Mammary epithelial cell (primary cell): ENCODE measurements at regions of chr17 and their contacts with region 1.

Region 1: DNA sequence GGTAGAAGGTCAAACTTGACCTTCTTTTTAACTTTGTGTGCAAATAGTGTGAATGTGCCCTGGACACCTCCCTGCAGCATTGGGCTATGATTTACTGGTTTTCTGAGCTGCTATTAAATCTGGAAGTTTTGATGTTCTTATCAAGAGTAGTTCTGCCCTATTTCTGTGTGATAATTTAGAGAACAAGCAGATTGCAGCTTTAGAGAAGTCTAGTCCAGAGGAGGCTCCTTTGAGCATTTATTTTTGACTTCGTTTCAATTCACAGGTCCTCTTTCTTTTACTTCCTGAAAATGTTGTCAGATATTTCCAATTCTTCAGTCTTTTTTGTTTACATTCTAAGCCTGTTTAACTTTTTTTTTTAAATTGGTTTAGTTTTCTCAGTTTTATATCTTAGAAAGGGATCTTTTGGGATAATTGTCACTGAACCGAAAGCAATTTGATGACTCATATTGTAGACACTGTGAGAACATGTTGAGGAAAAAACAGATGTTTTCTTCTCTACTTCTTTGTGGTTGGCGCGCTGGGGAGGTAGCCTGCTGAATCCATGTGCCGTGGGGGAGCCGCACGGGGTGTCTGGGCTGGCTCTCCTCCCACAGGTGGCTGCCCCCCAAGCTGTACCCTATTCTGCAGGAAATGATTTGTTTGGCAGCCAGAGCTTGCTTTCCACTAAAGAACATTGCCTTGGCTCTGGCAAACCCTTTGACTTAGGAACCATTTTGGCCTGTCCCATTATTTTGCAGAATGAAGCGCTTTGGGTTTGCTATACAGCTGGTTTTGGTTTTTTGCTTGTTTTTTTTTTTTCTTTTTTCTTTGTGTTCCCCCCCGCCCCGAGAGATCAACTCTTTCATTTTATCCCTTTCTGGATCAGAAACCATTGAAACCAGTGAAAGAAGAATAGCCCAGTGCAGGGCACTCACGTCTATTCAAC is 53.4 kb downstream of the MFSD11 start:
- DNase-seq: peak; percentile 65
- H3K4me3 ChIP-seq: peak overlapping the region in 1 of 3 experiments; percentile 11
- H3K27ac ChIP-seq: no peak overlapping the region
- H3K4me1 ChIP-seq: peaks cover 6% of the 10 kb centered on the region
- H3K27me3 ChIP-seq: no peaks in the 10 kb centered on the region
- CTCF ChIP-seq: no peak

Region 2: DNA sequence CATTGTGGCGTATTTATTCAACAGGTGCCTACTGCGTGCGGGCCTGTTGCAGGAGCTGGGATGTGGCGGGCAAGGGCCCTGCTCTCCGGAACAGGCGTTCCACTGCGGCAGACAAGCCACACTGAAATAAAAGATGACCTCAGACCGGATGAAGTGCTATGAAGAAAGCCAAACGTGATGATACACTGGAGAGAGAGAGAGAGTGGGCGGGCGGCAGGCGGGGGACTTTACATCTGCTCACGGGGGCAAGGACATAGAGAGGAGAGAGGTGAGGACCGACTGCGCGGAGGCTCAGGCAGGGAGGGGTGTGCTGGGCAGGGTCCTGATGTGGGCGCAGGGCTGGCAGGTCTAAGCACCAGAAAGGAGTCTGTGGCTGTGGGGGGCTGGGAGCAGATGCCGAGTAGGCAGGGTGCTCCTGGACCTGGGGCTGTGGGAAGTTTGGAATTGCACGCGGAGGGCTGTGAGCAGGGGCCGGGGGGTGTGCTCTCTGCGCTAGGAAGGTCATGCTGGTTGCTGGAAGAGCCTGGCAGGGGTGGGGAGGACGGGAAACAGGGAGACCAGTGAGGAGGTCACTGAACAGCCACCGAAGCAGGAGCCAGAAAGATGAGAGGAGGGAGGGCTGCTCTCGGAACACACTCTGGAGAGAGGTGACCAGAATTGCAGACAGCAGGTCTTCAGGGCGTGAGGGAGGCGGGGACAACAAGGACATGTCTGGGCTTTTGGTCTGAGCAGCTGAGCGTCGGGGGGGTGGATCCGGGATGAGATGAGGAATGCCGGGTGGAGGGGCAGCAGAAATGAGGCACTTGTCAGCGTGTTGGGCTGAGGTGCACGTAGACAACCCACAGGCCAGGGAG is 90.5 kb before region 1 on chr17:
- CTCF ChIA-PET with region 1: no interaction called
- dilution Hi-C with region 1: no loop called
- in situ Hi-C with region 1: no loop called
- intact Hi-C with region 1: no loop called
- DNase-seq: peak; percentile 82
- H3K4me3 ChIP-seq: peak overlapping the region in 2 of 3 experiments; percentile 27 to 32
- H3K27ac ChIP-seq: peak overlapping the region; percentile 43
- H3K4me1 ChIP-seq: peaks cover 29% of the 10 kb centered on the region
- H3K27me3 ChIP-seq: no peaks in the 10 kb centered on the region
- CTCF ChIP-seq: no peak

Region 3: GRCh38 chr17:77068915-77069314 is 277.6 kb after region 1 on chr17:
- CTCF ChIA-PET with region 1: no interaction called
- dilution Hi-C with region 1: no loop called
- in situ Hi-C with region 1: no loop called
- intact Hi-C with region 1: loop called (anchors 2 kb)
- DNase-seq: peak; percentile 54
- H3K4me3 ChIP-seq: no peak overlapping the region
- H3K27ac ChIP-seq: no peak overlapping the region
- H3K4me1 ChIP-seq: peaks cover 9% of the 10 kb centered on the region
- H3K27me3 ChIP-seq: peaks cover 5% of the 10 kb centered on the region
- CTCF ChIP-seq: no peak